ENCODE measurements at regions of chr19 and their contacts with region 1.

Region 1: GRCh38 chr19:42108527-42109389 is 23.5 kb downstream of the POU2F2 start:
- DNase-seq: peak; percentile 94
- ATAC-seq: peak; percentile 94
- H3K4me3 Mint-ChIP-seq: no peak overlapping the region
- H3K27ac Mint-ChIP-seq: peak overlapping the region; percentile 26
- H3K4me1 Mint-ChIP-seq: peaks cover 33% of the 10 kb centered on the region
- H3K27me3 Mint-ChIP-seq: no peaks in the 10 kb centered on the region

Region 2: DNA sequence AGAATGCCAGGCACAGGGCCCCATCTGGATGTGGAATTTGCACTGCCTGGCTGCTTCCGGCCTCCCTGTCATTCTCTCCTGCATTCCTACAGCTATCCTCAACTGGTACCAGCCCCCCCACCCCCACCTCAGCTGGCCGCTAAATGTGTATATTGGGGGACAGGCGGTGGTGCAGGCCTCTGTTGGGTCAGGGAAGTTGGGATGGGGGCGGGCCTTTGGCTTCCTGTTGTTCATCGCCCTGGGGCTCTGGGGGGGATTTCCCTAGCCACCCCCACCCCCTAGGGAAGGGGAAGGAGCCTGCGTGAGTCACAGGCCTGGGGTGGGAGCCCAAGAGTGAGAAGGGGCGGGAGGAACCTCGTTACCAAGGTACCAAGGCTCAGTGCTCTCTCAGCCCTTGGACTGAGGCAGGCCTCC is 12.9 kb after region 1 on chr19:
- CTCF ChIA-PET with region 1: interaction called, 65 read pairs
- POLR2A ChIA-PET with region 1: interaction called, 3 read pairs
- DNase-seq: peak; percentile 70
- ATAC-seq: peak; percentile 66
- H3K4me3 Mint-ChIP-seq: peak overlapping the region; percentile 57
- H3K27ac Mint-ChIP-seq: peak overlapping the region; percentile 92
- H3K4me1 Mint-ChIP-seq: peaks cover 53% of the 10 kb centered on the region
- H3K27me3 Mint-ChIP-seq: no peaks in the 10 kb centered on the region

Region 3: GRCh38 chr19:42176990-42177685 is 68.4 kb after region 1 on chr19:
- CTCF ChIA-PET with region 1: interaction called, 17 read pairs
- POLR2A ChIA-PET with region 1: no interaction called
- DNase-seq: peak; percentile 79
- ATAC-seq: peak; percentile 96
- H3K4me3 Mint-ChIP-seq: no peak overlapping the region
- H3K27ac Mint-ChIP-seq: no peak overlapping the region
- H3K4me1 Mint-ChIP-seq: peaks cover 15% of the 10 kb centered on the region
- H3K27me3 Mint-ChIP-seq: peaks cover 33% of the 10 kb centered on the region

Region 4: GRCh38 chr19:42244347-42245220 is 135.8 kb after region 1 on chr19:
- CTCF ChIA-PET with region 1: interaction called, 20 read pairs
- POLR2A ChIA-PET with region 1: no interaction called
- DNase-seq: peak; percentile 96
- ATAC-seq: peak; percentile 47
- H3K4me3 Mint-ChIP-seq: peak overlapping the region; percentile 95
- H3K27ac Mint-ChIP-seq: peak overlapping the region; percentile 96
- H3K4me1 Mint-ChIP-seq: peaks cover 48% of the 10 kb centered on the region
- H3K27me3 Mint-ChIP-seq: no peaks in the 10 kb centered on the region